ENCODE measurements at regions of chr6 and their contacts with region 1.

Region 1: GRCh38 chr6:20877008-20877937 is 343.0 kb downstream of the CDKAL1 start:
- DNase-seq: peak; percentile 2
- H3K4me3 Mint-ChIP-seq: no peak overlapping the region
- H3K27ac Mint-ChIP-seq: peak overlapping the region; percentile 79
- H3K4me1 Mint-ChIP-seq: peaks cover 15% of the 10 kb centered on the region
- H3K27me3 Mint-ChIP-seq: no peaks in the 10 kb centered on the region

Region 2: GRCh38 chr6:20827798-20828197 is 49.5 kb before region 1 on chr6:
- intact Hi-C with region 1: no loop called
- DNase-seq: no peak
- H3K4me3 Mint-ChIP-seq: no peak overlapping the region
- H3K27ac Mint-ChIP-seq: no peak overlapping the region
- H3K4me1 Mint-ChIP-seq: peaks cover under 1% of the 10 kb centered on the region
- H3K27me3 Mint-ChIP-seq: no peaks in the 10 kb centered on the region

Region 3: DNA sequence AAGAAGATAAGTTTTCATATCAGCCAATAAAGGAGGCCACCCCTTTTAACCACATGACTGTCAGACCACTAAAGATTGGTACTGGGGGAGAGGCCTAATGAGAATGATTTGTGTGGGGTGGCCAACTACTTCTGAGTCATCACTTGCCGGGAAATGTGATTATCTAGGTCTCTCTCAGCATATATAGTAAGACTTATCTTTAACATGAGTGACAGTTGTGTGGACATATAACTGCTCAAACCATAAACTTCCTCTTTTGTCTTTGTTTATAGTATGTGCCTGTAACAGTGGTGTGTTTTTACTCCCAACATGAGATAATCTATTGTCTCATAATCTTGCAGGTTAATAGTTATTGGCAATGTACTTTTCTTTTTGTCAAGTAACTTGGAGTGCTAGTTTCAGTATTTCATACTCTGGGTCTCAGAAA is 30.7 kb before region 1 on chr6:
- intact Hi-C with region 1: loop called (anchors 2 kb)
- DNase-seq: no peak
- H3K4me3 Mint-ChIP-seq: no peak overlapping the region
- H3K27ac Mint-ChIP-seq: no peak overlapping the region
- H3K4me1 Mint-ChIP-seq: peaks cover 27% of the 10 kb centered on the region
- H3K27me3 Mint-ChIP-seq: no peaks in the 10 kb centered on the region